A549 (cell line): ENCODE measurements at regions of chr3 and their contacts with region 1.

Region 1: DNA sequence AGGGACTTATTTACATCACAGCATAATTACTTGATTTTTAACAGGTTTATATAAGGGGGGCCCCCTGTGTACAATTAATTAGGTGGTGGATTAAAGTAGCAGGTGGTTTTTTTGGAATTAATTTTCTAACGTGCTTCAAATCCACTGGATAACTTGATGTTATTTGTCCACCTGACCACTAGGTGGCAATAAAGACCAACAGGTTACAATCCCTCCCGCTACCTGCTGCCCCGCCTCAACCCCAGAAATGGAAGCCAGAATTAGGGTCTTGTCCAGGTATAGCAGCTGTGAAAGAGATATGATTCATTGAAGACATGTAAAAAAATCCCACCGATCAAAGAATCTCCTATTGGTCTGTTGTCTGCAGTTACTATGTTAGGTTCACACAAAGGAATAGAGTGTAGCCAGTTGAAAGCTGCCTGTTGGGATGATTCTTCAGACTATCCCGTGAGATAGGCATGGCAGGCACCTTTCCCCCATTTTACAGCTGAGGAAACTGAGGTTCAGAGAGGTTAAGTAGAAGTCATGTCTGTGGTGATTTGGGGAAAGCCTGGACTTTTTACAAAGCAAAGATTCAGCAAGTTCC is 44.0 kb downstream of the MFSD1 start:
- DNase-seq: peak; percentile 49 to 50
- ATAC-seq: peak in 1 of 2 experiments; percentile 74; a peak in 3 of 6 replicates
- H3K4me3 ChIP-seq: no peak overlapping the region
- H3K27ac ChIP-seq: no peak overlapping the region
- H3K4me1 ChIP-seq: no peaks in the 10 kb centered on the region
- CTCF ChIP-seq: peak; percentile 86
- EP300 ChIP-seq: no peak
- POLR2A ChIP-seq: no peak
- RAD21 ChIP-seq: peak; percentile 89 to 91

Region 2: DNA sequence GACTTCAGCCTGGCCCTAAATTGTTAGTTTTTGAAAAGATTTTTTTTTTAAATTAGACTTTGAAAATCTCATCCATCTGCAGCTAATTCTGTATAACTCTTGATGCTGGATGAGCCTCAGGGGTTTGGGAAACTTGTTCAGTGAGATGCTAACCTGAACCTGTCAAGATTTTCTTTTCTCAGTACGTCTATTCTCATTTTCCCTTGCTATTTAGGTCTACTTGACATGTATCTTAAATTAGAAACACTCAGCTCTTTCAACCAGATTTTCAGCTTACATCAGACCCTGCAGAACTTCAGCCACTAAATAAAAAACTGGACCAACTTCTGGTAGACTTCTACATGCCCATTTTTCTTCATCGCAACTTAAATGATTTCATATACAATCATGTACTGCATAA is 17.4 kb after region 1 on chr3:
- CTCF ChIA-PET with region 1: interaction called, 20 read pairs
- POLR2A ChIA-PET with region 1: no interaction called
- DNase-seq: no peak
- ATAC-seq: no peak
- H3K4me3 ChIP-seq: no peak overlapping the region
- H3K27ac ChIP-seq: no peak overlapping the region
- H3K4me1 ChIP-seq: no peaks in the 10 kb centered on the region
- CTCF ChIP-seq: no peak
- EP300 ChIP-seq: no peak
- POLR2A ChIP-seq: no peak
- RAD21 ChIP-seq: no peak